ENCODE measurements at regions of chr10 and their contacts with region 1.

Region 1: GRCh38 chr10:123008439-123009205 is at the starts of genes ACADSB and IKZF5:
- DNase-seq: peak; percentile 93 to 99
- H3K4me3 ChIP-seq: peak within 1 kb of the TSS; percentile 75 to 98
- H3K27ac ChIP-seq: peak within 1 kb of the TSS; percentile 89 to 95
- H3K4me1 ChIP-seq: peaks cover 3 to 15% of the 10 kb centered on the region in 2 donors
- H3K27me3 ChIP-seq: no peaks in the 10 kb centered on the region
- CTCF ChIP-seq: no peak
- total RNA-seq, gene ACADSB: 1.8 TPM
- total RNA-seq, gene IKZF5: 4.3 TPM

Region 2: GRCh38 chr10:122495406-122496340 is 512.9 kb before region 1 on chr10:
- intact Hi-C with region 1: no loop called
- DNase-seq: peak in 1 of 2 donors; percentile 88
- H3K4me3 ChIP-seq: peak overlapping the region in 1 of 2 donors; percentile 2
- H3K27ac ChIP-seq: peak overlapping the region; percentile 79 to 95
- H3K4me1 ChIP-seq: peaks cover 37 to 73% of the 10 kb centered on the region in 2 donors
- H3K27me3 ChIP-seq: no peaks in the 10 kb centered on the region
- CTCF ChIP-seq: no peak

Region 3: GRCh38 chr10:122953827-122954730 is 54.5 kb before region 1 on chr10 and contains the start of gene C10orf88:
- intact Hi-C with region 1: loop called (anchors 1 kb)
- DNase-seq: peak; percentile 88 to 98
- H3K4me3 ChIP-seq: peak within 1 kb of the TSS; percentile 76 to 97
- H3K27ac ChIP-seq: peak within 1 kb of the TSS; percentile 70 to 75
- H3K4me1 ChIP-seq: peaks cover 0 to 5% of the 10 kb centered on the region in 2 donors
- H3K27me3 ChIP-seq: no peaks in the 10 kb centered on the region
- CTCF ChIP-seq: no peak
- total RNA-seq, gene C10orf88: 1.3 TPM

Region 4: DNA sequence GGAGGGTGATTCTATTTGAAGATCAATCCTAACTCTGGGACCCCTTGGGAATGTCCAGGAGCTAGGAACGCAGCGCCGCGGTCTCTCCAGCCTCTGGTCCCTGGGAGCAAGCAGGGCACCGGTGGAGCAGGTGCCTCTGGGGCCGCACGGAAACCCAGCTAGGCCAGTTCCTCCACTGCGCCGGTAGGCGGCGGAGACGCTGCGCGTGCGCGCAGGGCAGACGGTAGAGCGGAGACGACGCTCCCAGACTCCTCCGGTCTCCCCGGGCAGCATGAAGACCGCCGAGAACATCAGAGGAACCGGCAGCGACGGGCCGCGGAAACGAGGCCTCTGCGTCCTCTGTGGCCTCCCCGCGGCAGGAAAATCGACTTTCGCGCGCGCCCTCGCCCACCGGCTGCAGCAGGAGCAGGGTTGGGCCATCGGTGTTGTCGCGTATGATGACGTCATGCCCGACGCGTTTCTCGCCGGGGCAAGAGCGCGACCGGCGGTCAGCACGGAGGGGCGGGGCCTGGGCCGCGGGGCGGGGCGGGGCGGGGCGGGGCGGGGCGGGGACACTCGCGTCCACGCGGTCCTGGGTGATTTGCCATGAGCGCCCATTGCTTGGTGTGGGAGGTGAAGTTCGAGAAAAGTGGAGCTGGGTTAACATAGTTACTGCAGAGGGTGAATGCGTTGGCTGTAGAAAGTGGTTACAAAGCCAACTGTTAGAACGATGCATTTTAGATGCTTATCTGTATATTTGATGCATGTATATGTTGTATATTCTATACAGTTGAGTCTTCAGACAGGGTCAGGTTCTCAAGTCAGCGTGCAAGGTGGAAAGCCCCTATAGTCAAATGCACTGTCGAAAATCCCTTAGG is 28.2 kb before region 1 on chr10 and contains the start of gene PSTK:
- intact Hi-C with region 1: loop called (anchors 1 kb)
- DNase-seq: peak; percentile 31 to 92
- H3K4me3 ChIP-seq: peak within 1 kb of the TSS; percentile 75 to 88
- H3K27ac ChIP-seq: peak within 1 kb of the TSS; percentile 89 to 90
- H3K4me1 ChIP-seq: peaks cover 0 to 2% of the 10 kb centered on the region in 2 donors
- H3K27me3 ChIP-seq: no peaks in the 10 kb centered on the region
- CTCF ChIP-seq: peak; percentile 95 to 98 (median 97)
- total RNA-seq, gene PSTK: not detected

Region 5: DNA sequence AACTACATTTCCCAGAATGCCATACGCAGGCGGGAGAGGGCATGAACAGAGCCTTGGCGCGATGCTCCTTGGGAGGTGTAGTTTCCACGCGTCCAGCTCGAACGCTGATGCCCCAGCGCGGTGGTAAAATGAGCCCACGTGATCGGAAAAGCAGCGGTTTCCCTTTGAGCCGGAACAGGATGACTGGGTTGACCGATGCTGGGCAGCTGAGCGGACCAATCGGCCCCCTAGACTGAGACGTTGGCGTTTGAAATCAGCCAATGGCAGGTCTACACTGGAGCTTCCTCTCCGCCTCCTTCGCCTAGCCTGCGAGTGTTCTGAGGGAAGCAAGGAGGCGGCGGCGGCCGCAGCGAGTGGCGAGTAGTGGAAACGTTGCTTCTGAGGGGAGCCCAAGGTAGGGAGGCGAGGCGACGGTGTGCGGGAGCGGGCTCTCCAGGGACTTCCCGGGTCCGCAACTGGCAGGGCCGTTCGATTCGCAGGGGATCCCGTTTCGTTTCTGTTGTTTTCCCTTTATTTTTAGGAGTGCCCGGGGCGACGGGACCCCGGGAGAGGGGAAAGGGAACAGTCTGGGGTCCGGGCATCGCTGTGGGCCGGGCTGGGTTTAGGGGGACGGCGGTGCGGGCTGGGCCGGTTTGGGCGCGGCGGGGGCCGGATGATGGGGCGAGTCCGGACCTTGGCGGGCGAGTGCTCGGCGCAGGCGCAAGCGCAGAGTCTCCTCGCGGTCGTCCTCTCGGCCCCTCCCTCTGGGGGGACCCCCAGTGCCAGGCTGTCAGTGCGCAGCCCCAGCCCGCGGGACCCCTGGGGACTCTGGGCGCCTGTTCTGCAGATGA is 145.7 kb after region 1 on chr10 and contains the start of gene BUB3:
- intact Hi-C with region 1: loop called (anchors 1 kb)
- DNase-seq: peak; percentile 95 to 99
- H3K4me3 ChIP-seq: peak within 1 kb of the TSS; percentile 74 to 92
- H3K27ac ChIP-seq: peak within 1 kb of the TSS; percentile 75 to 90
- H3K4me1 ChIP-seq: peaks cover 8 to 19% of the 10 kb centered on the region in 2 donors
- H3K27me3 ChIP-seq: peaks cover 16% of the 10 kb centered on the region
- CTCF ChIP-seq: peak in 2 of 3 experiments; percentile 5 to 30
- total RNA-seq, gene BUB3: 12.2 TPM